ENCODE measurements at regions of chrX and their contacts with region 1.

Region 1: DNA sequence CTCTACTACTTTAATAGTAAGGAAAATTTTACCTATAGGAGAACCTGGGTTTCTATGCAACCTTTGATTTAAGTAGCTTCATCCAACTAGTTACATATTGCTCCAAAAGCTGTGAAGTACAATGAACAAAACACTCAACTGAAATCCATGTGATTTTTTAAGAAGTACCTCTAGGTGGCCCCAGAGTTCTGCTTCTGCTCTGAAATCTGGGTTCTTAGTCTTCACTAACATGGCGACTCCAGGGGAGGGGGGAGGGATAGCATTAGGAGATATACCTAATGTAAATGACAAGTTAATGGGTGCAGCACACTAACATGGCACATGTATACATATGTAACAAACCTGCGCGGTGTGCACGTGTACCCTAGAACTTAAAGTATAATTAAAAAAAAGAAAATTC is 73.4 kb upstream of the MAGEB2 start:
- H3K4me3 ChIP-seq: no peak overlapping the region
- H3K27ac ChIP-seq: no peak overlapping the region
- H3K4me1 ChIP-seq: no peaks in the 10 kb centered on the region
- CTCF ChIP-seq: no peak

Region 2: GRCh38 chrX:30196322-30196721 is 54.4 kb after region 1 on chrX:
- CTCF ChIA-PET with region 1: interaction called, 10 read pairs
- POLR2A ChIA-PET with region 1: no interaction called
- H3K4me3 ChIP-seq: no peak overlapping the region
- H3K27ac ChIP-seq: no peak overlapping the region
- H3K4me1 ChIP-seq: no peaks in the 10 kb centered on the region
- CTCF ChIP-seq: no peak

Measured in HEK293 (cell line).